ENCODE measurements at regions of chr17 and their contacts with region 1.

Region 1: GRCh38 chr17:43778337-43779144 is at the start of gene DUSP3:
- DNase-seq: peak; percentile 47 to 89 (median 68)
- ATAC-seq: peak; percentile 96
- H3K4me3 ChIP-seq: peak within 1 kb of the TSS; percentile 65
- H3K4me3 Mint-ChIP-seq: peak within 1 kb of the TSS; percentile 90
- H3K27ac ChIP-seq: peak within 1 kb of the TSS in 1 of 2 donors; percentile 38
- H3K27ac Mint-ChIP-seq: peak within 1 kb of the TSS; percentile 36
- H3K4me1 ChIP-seq: peaks cover 21% of the 10 kb centered on the region
- H3K4me1 Mint-ChIP-seq: peaks cover 8% of the 10 kb centered on the region
- H3K27me3 ChIP-seq: peaks cover 6 to 21% of the 10 kb centered on the region in 2 experiments
- H3K27me3 Mint-ChIP-seq: peaks cover 32% of the 10 kb centered on the region
- CTCF ChIP-seq: no peak
- total RNA-seq, gene DUSP3: 10.6 to 12.6 TPM

Region 2: GRCh38 chr17:43393944-43394482 is 384.5 kb before region 1 on chr17:
- CTCF ChIA-PET with region 1: no interaction called
- POLR2A ChIA-PET with region 1: no interaction called
- intact Hi-C with region 1: loop called in 1 of 2 experiments (anchors 10 kb)
- DNase-seq: peak; percentile 77 to 94 (median 89)
- ATAC-seq: peak; percentile 27
- H3K4me3 ChIP-seq: no peak overlapping the region
- H3K4me3 Mint-ChIP-seq: peak overlapping the region; percentile 49
- H3K27ac ChIP-seq: peak overlapping the region in 1 of 2 donors; percentile 14
- H3K27ac Mint-ChIP-seq: peak overlapping the region; percentile 16
- H3K4me1 ChIP-seq: peaks cover 40% of the 10 kb centered on the region
- H3K4me1 Mint-ChIP-seq: peaks cover 37% of the 10 kb centered on the region
- H3K27me3 ChIP-seq: no peaks in the 10 kb centered on the region
- H3K27me3 Mint-ChIP-seq: no peaks in the 10 kb centered on the region
- CTCF ChIP-seq: peak; percentile 90

Region 3: GRCh38 chr17:43706235-43706634 is 72.3 kb before region 1 on chr17:
- CTCF ChIA-PET with region 1: no interaction called
- POLR2A ChIA-PET with region 1: no interaction called
- intact Hi-C with region 1: no loop called
- DNase-seq: no peak
- ATAC-seq: no peak
- H3K4me3 ChIP-seq: no peak overlapping the region
- H3K4me3 Mint-ChIP-seq: no peak overlapping the region
- H3K27ac ChIP-seq: no peak overlapping the region
- H3K27ac Mint-ChIP-seq: no peak overlapping the region
- H3K4me1 ChIP-seq: peaks cover 4% of the 10 kb centered on the region
- H3K4me1 Mint-ChIP-seq: peaks cover 3% of the 10 kb centered on the region
- H3K27me3 ChIP-seq: peaks cover 4 to 12% of the 10 kb centered on the region in 2 experiments
- H3K27me3 Mint-ChIP-seq: peaks cover 39% of the 10 kb centered on the region
- CTCF ChIP-seq: no peak

Region 4: GRCh38 chr17:43720311-43721060 is 58.1 kb before region 1 on chr17:
- CTCF ChIA-PET with region 1: no interaction called
- POLR2A ChIA-PET with region 1: no interaction called
- intact Hi-C with region 1: loop called in 1 of 2 experiments (anchors 1 kb)
- DNase-seq: peak; percentile 53 to 86 (median 74)
- ATAC-seq: peak; percentile 87
- H3K4me3 ChIP-seq: peak overlapping the region; percentile 86
- H3K4me3 Mint-ChIP-seq: peak overlapping the region; percentile 98
- H3K27ac ChIP-seq: peak overlapping the region; percentile 85 to 89
- H3K27ac Mint-ChIP-seq: peak overlapping the region; percentile 92
- H3K4me1 ChIP-seq: peaks cover 12% of the 10 kb centered on the region
- H3K4me1 Mint-ChIP-seq: peaks cover 6% of the 10 kb centered on the region
- H3K27me3 ChIP-seq: peaks cover 0 to 2% of the 10 kb centered on the region in 2 experiments
- H3K27me3 Mint-ChIP-seq: peaks cover 3% of the 10 kb centered on the region
- CTCF ChIP-seq: no peak

Region 5: GRCh38 chr17:44503147-44504029 is 724.8 kb after region 1 on chr17 and contains the start of gene GPATCH8:
- CTCF ChIA-PET with region 1: no interaction called
- POLR2A ChIA-PET with region 1: no interaction called
- intact Hi-C with region 1: loop called in 1 of 2 experiments (anchors 10 kb)
- DNase-seq: peak; percentile 83 to 97 (median 92)
- ATAC-seq: peak; percentile 86
- H3K4me3 ChIP-seq: peak within 1 kb of the TSS; percentile 95
- H3K4me3 Mint-ChIP-seq: peak within 1 kb of the TSS; percentile 91
- H3K27ac ChIP-seq: peak within 1 kb of the TSS; percentile 80 to 91
- H3K27ac Mint-ChIP-seq: peak within 1 kb of the TSS; percentile 94
- H3K4me1 ChIP-seq: peaks cover 24% of the 10 kb centered on the region
- H3K4me1 Mint-ChIP-seq: peaks cover 54% of the 10 kb centered on the region
- H3K27me3 ChIP-seq: peaks cover 0 to 3% of the 10 kb centered on the region in 2 experiments
- H3K27me3 Mint-ChIP-seq: peaks cover 12% of the 10 kb centered on the region
- CTCF ChIP-seq: no peak
- total RNA-seq, gene GPATCH8: 76.0 to 76.9 TPM

Measured in CD4-positive, alpha-beta T cell (primary cell).